ENCODE measurements at regions of chr4 and their contacts with region 1.

Region 1: DNA sequence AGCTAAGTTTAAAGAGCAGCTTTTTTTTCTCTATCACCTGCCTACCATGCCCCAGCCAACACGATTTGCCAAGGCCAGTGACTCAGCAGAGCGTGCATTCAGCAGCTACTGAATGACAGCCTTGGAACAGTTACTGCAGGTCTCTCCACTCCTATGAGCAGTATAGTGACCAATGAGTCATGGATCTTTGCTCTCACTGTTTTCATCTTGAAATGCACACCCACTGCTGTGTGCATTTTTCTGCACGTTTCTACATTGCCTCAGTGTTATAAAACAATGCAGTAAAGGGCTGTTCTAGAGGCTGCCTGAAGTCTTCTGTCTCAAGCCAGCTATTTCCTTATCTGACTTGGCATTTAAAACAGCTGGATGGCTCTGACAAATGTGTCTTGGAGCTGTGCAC is 66.0 kb upstream of the C4orf54 start:
- DNase-seq: peak; percentile 88
- H3K4me3 ChIP-seq: no peak overlapping the region
- H3K27ac ChIP-seq: peak overlapping the region; percentile 77 to 87 (median 78)
- H3K4me1 ChIP-seq: peaks cover 0 to 53% (median 43%) of the 10 kb centered on the region in 4 donors
- H3K27me3 ChIP-seq: no peaks in the 10 kb centered on the region
- CTCF ChIP-seq: no peak
- EP300 ChIP-seq: peak; percentile 51 to 91 (median 66)
- POLR2A ChIP-seq: no peak

Region 2: GRCh38 chr4:99648321-99648720 is 75.3 kb before region 1 on chr4:
- intact Hi-C with region 1: loop called (anchors 5 kb)
- DNase-seq: no peak
- H3K4me3 ChIP-seq: no peak overlapping the region
- H3K27ac ChIP-seq: peak overlapping the region in 1 of 4 donors; percentile 21
- H3K4me1 ChIP-seq: peaks cover 0 to 19% (median 13%) of the 10 kb centered on the region in 4 donors
- H3K27me3 ChIP-seq: no peaks in the 10 kb centered on the region
- CTCF ChIP-seq: no peak
- EP300 ChIP-seq: no peak
- POLR2A ChIP-seq: no peak

Region 3: DNA sequence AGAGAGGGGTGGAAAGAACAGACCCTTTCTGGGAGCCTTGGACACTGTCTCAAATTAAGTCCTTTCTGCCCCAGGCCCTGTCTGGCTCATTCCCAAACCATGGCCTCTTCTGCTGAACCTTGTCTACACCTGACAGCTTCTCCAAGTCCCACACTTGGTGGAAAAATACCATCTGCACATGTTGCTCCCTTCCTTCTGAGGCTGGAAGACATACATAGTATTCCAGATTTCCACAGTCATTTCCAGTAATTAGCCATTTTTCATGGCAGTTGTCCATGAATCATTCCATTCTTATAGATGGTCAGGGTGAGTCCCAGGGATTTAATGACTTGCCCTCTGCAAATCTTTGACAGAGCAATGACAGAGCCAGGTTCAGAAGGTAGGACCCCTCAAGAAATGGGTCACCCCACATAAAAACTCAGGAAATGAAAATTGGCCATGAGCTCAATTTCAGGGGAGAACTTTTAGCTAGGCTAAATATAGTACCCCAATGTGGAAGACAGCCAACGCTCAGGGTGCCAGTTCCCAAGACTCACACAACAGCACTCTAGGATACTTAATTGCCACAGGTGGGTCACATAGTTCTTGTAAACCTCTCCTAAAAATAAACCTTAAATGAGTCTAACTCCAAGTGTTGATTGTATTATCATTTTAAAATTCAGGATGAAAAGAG is 76.9 kb after region 1 on chr4:
- intact Hi-C with region 1: no loop called
- DNase-seq: no peak
- H3K4me3 ChIP-seq: no peak overlapping the region
- H3K27ac ChIP-seq: peak overlapping the region in 1 of 4 donors; percentile 6
- H3K4me1 ChIP-seq: peaks cover 0 to 25% (median 11%) of the 10 kb centered on the region in 4 donors
- H3K27me3 ChIP-seq: no peaks in the 10 kb centered on the region
- CTCF ChIP-seq: no peak
- EP300 ChIP-seq: no peak
- POLR2A ChIP-seq: no peak

Region 4: DNA sequence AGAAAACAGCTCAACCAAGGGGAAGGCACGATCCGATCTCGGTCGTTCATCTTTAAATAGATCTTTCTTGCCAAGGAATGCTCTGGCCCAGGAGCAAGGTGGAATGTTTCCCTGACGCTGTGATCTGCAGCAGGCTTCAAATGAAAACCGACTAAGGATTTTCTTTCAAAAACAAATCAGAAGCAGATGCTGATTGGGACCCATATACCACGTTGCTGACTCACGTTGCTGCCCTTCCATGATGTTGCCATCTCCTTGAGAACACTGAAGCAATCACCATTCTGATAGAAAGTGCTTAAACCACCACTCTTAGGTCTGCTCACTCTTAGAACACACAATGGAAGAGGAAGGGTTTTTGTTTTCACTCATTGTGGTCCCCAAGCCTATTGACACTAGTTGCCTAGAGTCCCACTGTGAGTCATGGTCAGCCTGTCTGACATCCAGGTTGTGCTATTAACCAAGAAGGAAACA is 144.5 kb after region 1 on chr4:
- intact Hi-C with region 1: loop called (anchors 5 kb)
- DNase-seq: no peak
- H3K4me3 ChIP-seq: no peak overlapping the region
- H3K27ac ChIP-seq: peak overlapping the region; percentile 63 to 76 (median 68)
- H3K4me1 ChIP-seq: peaks cover 0 to 51% (median 35%) of the 10 kb centered on the region in 4 donors
- H3K27me3 ChIP-seq: no peaks in the 10 kb centered on the region
- CTCF ChIP-seq: no peak
- EP300 ChIP-seq: no peak
- POLR2A ChIP-seq: no peak

Region 5: GRCh38 chr4:99885063-99885664 is 161.6 kb after region 1 on chr4:
- intact Hi-C with region 1: loop called (anchors 5 kb)
- DNase-seq: no peak
- H3K4me3 ChIP-seq: no peak overlapping the region
- H3K27ac ChIP-seq: peak overlapping the region in 3 of 4 donors; percentile 39 to 72 (median 69)
- H3K4me1 ChIP-seq: peaks cover 0 to 54% (median 30%) of the 10 kb centered on the region in 4 donors
- H3K27me3 ChIP-seq: no peaks in the 10 kb centered on the region
- CTCF ChIP-seq: peak; percentile 37 to 63 (median 46)
- EP300 ChIP-seq: no peak
- POLR2A ChIP-seq: no peak

Region 6: DNA sequence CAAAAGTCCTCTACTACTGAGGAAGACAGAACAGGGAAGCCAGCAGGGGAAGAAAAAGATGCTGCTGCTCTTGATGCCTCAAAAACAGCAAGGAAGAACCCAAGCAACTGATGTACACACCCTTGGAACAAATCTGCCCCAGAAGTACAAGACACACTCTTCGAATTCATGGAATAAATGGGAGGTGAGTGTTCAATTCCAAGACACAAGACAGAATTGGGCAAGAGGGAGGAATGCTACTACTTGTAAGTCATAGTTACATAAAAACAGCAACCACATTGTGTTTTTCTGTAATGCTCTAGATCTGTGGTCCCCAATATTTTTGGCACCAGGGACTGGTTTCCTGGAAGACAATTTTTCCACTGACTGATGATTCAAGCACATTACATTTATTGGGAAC is 284.4 kb after region 1 on chr4:
- intact Hi-C with region 1: no loop called
- DNase-seq: no peak
- H3K4me3 ChIP-seq: no peak overlapping the region
- H3K27ac ChIP-seq: no peak overlapping the region
- H3K4me1 ChIP-seq: no peaks in the 10 kb centered on the region
- H3K27me3 ChIP-seq: no peaks in the 10 kb centered on the region
- CTCF ChIP-seq: no peak
- EP300 ChIP-seq: no peak
- POLR2A ChIP-seq: no peak